ENCODE measurements at regions of chr6 and their contacts with region 1.

Region 1: GRCh38 chr6:33248925-33249731 is 22.5 kb downstream of the VPS52 start:
- H3K4me3 Mint-ChIP-seq: peak overlapping the region; percentile 82
- H3K27ac Mint-ChIP-seq: peak overlapping the region; percentile 92
- H3K4me1 Mint-ChIP-seq: peaks cover 49% of the 10 kb centered on the region
- H3K27me3 Mint-ChIP-seq: peaks cover 6% of the 10 kb centered on the region

Region 2: DNA sequence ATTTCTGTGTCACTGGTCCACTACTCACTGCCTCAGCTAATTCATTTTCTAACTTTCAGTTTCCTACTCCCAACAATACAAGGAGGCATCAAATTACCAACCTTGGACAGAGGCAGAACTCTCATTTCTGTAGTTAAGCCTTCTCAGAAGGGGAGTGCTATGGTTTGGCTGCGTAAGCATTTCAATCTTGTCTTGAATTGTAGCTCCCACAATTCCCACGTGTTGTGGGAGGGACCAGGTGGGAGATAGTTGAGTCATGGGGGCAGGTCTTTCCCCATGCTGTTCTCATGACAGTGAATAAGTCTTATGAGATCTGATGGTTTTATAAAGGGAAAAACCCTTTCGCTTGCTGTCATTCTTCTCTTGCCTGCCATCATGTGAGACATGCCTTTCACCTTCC is 786.5 kb before region 1 on chr6:
- intact Hi-C with region 1: no loop called
- H3K4me3 Mint-ChIP-seq: no peak overlapping the region
- H3K27ac Mint-ChIP-seq: no peak overlapping the region
- H3K4me1 Mint-ChIP-seq: peaks cover 31% of the 10 kb centered on the region
- H3K27me3 Mint-ChIP-seq: peaks cover 32% of the 10 kb centered on the region

Region 3: DNA sequence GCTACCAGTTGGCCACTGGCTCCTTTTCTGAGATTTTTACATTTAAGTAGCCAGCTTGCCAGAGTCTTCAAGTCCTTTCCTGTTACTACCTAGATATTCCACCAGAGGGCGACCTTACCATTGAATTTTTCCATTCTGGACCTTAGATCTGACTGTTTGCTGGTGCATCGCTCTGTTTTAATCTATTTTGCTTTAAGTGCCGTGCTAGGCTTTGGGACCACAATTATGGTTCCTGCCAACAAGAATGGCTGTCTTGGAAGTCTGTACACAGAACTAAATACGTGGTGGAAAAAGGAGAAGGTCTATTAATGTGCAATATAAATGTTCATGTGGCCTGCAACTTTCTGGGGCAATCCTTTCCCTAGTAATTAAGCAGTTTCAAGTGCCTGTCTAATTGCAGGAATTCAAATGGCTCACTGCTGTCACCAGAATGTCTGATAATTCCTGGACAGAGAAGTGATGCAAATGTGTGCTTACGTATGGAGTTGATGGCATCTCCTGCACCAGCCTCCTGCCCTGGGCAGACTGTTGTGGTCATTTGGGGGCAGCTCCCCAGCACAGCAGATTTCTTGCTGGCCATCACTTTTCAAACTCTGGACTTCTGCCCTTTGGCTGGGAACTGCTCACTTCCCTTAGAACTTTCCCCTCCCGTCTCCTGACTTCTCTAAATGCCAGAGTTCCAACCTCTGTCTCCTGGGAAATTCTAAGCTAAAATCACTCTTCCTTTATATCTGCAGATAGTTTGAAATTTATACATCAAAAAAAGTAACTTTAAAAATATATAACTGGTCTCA is 234.1 kb before region 1 on chr6:
- intact Hi-C with region 1: loop called (anchors 2 kb)
- H3K4me3 Mint-ChIP-seq: peak overlapping the region; percentile 73
- H3K27ac Mint-ChIP-seq: peak overlapping the region; percentile 99
- H3K4me1 Mint-ChIP-seq: peaks cover 75% of the 10 kb centered on the region
- H3K27me3 Mint-ChIP-seq: peaks cover 2% of the 10 kb centered on the region

Region 4: GRCh38 chr6:33123732-33124524 is 125.2 kb before region 1 on chr6:
- intact Hi-C with region 1: loop called (anchors 2 kb)
- H3K4me3 Mint-ChIP-seq: no peak overlapping the region
- H3K27ac Mint-ChIP-seq: no peak overlapping the region
- H3K4me1 Mint-ChIP-seq: no peaks in the 10 kb centered on the region
- H3K27me3 Mint-ChIP-seq: peaks cover 27% of the 10 kb centered on the region

Region 5: GRCh38 chr6:33161354-33162331 is 87.5 kb before region 1 on chr6:
- intact Hi-C with region 1: loop called (anchors 1 kb)
- H3K4me3 Mint-ChIP-seq: peak overlapping the region; percentile 78
- H3K27ac Mint-ChIP-seq: peak overlapping the region; percentile 88
- H3K4me1 Mint-ChIP-seq: peaks cover 35% of the 10 kb centered on the region
- H3K27me3 Mint-ChIP-seq: peaks cover 20% of the 10 kb centered on the region

Region 6: DNA sequence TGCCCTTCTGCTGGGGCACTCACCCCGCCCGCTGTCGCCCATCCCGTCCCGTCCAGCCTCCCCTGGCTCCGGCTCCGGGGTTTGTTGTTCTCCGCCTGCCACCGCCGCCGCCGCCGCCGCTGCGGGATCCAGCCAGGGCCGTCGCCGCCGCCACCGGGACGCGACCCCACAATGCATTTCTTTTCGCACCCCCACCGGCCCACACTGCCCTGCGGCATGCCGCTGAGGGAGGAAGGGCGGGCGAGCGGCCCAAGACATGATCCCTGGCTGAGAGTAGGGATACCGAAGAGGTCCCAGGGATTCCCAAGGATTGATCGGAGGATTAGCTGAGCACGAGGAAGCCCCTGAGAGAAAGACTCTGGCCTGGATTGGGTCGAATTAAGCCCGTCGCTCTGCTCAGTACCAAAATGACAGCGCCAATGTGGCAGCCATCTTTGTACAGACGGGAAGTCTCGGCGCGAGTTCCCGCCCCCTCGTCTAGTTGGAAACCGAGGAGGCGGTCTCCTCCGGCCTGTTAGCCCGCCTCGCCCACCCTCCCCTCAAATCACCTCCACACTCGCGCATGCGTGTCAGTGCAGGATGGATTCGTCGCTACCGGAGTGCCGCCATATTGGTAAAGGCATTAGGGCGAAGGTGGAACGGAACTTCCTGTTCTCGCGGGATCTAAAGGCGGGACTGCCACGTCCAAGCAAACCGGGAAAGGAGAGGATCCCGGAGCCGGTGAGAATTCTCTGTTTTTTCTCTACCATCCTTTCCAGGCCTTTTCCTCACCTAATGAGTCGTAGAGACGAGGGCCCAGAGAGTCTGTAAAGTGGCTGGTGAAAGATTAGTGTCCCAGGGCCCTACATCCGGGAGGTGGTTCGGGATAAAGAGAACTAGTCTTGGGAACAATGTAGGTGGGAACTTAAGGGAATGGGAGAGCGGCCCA is 48.6 kb before region 1 on chr6 and contains the starts of genes RXRB and SLC39A7:
- intact Hi-C with region 1: loop called (anchors 2 kb)
- H3K4me3 Mint-ChIP-seq: peak within 1 kb of the TSS; percentile 98
- H3K27ac Mint-ChIP-seq: peak within 1 kb of the TSS; percentile 99
- H3K4me1 Mint-ChIP-seq: peaks cover 85% of the 10 kb centered on the region
- H3K27me3 Mint-ChIP-seq: no peaks in the 10 kb centered on the region

Region 7: DNA sequence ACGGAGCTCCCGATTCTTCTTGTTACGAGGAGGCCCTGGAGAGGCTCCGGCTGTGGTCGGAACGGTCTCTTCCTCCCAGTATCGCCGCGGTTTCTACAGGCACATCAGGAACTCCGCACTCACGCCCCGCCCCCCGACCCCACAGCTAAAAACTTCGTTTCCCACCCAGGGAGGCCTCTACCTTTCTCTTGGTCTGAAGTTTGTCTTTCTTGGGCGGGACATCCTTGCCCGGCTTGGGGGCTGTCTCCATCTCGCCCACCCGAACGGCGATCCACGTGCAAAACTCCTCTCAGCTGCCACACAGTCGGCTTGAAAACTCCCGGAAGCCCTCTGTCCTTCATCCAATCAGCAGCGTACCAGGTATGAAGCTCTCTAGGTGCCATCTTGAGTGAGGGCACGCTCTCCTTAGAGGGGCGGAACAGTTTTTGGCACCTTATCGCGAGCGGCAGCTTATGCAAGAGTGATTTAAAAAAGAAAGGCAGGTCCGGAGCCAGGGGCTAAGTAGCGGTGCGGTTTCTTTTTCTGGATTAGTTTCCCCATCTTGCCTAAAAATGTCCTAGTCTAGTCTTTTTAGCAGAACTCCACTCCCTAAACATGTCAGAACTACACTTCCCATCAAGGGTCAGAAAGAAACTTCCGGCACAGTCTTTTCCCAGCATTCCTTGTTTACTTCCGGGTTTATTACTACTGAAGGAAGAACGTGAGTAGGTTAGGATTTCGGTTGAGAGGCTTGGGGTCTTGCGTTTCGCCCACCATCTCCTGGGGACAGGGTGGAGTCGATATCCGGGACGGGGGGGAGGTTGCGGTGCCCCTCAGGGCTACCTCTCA is 40.0 kb after region 1 on chr6 and contains the starts of genes PFDN6 and WDR46:
- intact Hi-C with region 1: no loop called
- H3K4me3 Mint-ChIP-seq: peak within 1 kb of the TSS; percentile 92
- H3K27ac Mint-ChIP-seq: peak within 1 kb of the TSS; percentile 86
- H3K4me1 Mint-ChIP-seq: peaks cover 53% of the 10 kb centered on the region
- H3K27me3 Mint-ChIP-seq: no peaks in the 10 kb centered on the region

Region 8: GRCh38 chr6:33299237-33299944 is 50.3 kb after region 1 on chr6:
- intact Hi-C with region 1: loop called (anchors 2 kb)
- H3K4me3 Mint-ChIP-seq: peak overlapping the region; percentile 99
- H3K27ac Mint-ChIP-seq: peak overlapping the region; percentile 97
- H3K4me1 Mint-ChIP-seq: peaks cover 71% of the 10 kb centered on the region
- H3K27me3 Mint-ChIP-seq: no peaks in the 10 kb centered on the region

Region 9: GRCh38 chr6:33417903-33418689 is 169.0 kb after region 1 on chr6 and contains the start of gene CUTA:
- intact Hi-C with region 1: no loop called
- H3K4me3 Mint-ChIP-seq: peak within 1 kb of the TSS; percentile 89
- H3K27ac Mint-ChIP-seq: peak within 1 kb of the TSS; percentile 95
- H3K4me1 Mint-ChIP-seq: peaks cover 60% of the 10 kb centered on the region
- H3K27me3 Mint-ChIP-seq: peaks cover 16% of the 10 kb centered on the region